CD4-positive, alpha-beta memory T cell (primary cell): ENCODE measurements at regions of chr6 and their contacts with region 1.

Region 1: GRCh38 chr6:132813173-132813856 is 1.1 kb upstream of the RPS12 start:
- DNase-seq: peak; percentile 58 to 67 (median 64)
- H3K4me3 ChIP-seq: peak overlapping the region; percentile 78
- H3K4me3 Mint-ChIP-seq: peak overlapping the region; percentile 94 to 100 (median 98)
- H3K27ac ChIP-seq: peak overlapping the region; percentile 76
- H3K27ac Mint-ChIP-seq: peak overlapping the region; percentile 96 to 99 (median 98)
- H3K4me1 ChIP-seq: peaks cover 40% of the 10 kb centered on the region
- H3K4me1 Mint-ChIP-seq: peaks cover 28 to 58% (median 45%) of the 10 kb centered on the region in 4 donors
- H3K27me3 ChIP-seq: no peaks in the 10 kb centered on the region
- H3K27me3 Mint-ChIP-seq: peaks cover 0 to 2% of the 10 kb centered on the region in 2 donors

Region 2: DNA sequence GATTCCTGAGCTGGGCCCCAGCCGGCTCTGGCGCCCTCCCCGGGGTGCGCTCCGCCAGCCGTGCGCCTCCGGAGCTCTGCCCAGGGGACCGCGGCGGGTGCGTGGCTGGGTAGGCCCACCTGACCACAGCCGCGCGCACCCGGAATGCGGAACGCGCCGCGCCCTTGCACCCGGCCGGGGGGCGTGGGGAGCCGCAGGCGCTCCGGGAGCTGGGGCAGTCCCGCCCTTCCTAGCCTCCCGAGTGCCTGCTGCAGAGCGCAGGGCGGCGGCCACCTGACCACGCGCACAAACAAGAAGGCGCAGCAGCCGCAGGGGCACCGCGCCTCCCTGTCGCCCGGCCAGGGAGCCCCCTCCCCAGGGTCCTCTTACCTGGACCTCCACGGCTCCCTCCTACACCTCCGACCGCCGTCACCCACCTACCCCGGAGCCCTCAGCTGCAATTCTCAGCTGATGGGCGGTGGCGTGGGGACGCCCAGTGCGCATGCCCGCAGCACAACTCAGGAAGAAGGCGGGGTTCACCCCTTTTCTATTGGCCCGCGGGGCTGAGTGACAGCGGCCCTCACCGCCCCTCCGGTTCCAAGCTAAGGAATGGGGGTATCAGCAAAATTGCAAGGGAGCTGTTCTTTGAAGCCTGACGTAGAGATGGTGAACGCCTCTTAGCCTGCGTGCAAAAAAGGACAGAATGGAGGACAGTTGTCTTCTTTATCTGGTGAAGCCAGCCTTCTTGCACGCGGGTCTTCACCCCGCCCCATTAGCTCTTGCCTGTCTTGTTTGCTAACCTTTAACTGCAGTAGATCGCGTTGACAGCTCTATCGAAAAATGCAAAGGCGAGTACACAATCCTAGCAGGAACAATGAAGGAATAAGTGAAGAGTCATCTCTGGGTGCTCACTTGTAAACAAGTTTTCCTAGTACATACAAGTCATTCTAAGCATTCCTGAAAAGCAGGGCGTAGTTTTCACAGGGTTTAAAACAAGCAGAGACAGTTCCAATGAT is 300.4 kb before region 1 on chr6 and contains the start of gene STX7:
- CTCF ChIA-PET with region 1: interaction called, 3 read pairs
- POLR2A ChIA-PET with region 1: interaction called, 39 read pairs
- intact Hi-C with region 1: loop called (anchors 1 kb)
- DNase-seq: peak; percentile 85 to 89 (median 87)
- H3K4me3 ChIP-seq: peak within 1 kb of the TSS; percentile 36 to 63
- H3K4me3 Mint-ChIP-seq: peak within 1 kb of the TSS; percentile 98 to 99 (median 98)
- H3K27ac ChIP-seq: peak within 1 kb of the TSS; percentile 54
- H3K27ac Mint-ChIP-seq: peak within 1 kb of the TSS; percentile 47 to 97 (median 92)
- H3K4me1 ChIP-seq: peaks cover 23% of the 10 kb centered on the region
- H3K4me1 Mint-ChIP-seq: peaks cover 23 to 40% (median 30%) of the 10 kb centered on the region in 4 donors
- H3K27me3 ChIP-seq: no peaks in the 10 kb centered on the region
- H3K27me3 Mint-ChIP-seq: no peaks in the 10 kb centered on the region
- total RNA-seq, gene STX7: 22.7 TPM

Region 3: DNA sequence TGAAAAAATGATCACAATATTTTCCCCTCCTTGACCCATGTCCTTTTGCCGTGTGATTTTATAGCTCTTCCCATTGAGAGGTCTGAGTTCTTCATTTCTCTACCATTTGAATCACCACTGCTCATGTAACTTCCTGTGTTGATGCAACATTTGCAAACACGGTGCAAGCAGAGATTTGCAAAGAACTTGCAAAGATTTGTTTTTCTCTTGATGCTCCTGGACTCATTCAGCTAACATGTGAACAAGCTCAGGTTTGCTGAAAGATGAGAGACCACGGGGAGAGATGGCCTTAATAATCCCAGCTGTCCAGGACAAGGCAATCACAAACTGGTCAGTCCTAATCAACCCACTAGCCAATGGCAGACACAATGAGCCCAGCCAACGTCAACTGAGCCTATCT is 64.2 kb before region 1 on chr6:
- CTCF ChIA-PET with region 1: no interaction called
- POLR2A ChIA-PET with region 1: interaction called, 12 read pairs
- intact Hi-C with region 1: no loop called
- DNase-seq: no peak
- H3K4me3 ChIP-seq: no peak overlapping the region
- H3K4me3 Mint-ChIP-seq: peak overlapping the region in 3 of 8 donors; percentile 3 to 42 (median 26)
- H3K27ac ChIP-seq: no peak overlapping the region
- H3K27ac Mint-ChIP-seq: peak overlapping the region in 4 of 7 donors; percentile 7 to 68 (median 15)
- H3K4me1 ChIP-seq: peaks cover 26% of the 10 kb centered on the region
- H3K4me1 Mint-ChIP-seq: peaks cover 16 to 29% (median 23%) of the 10 kb centered on the region in 4 donors
- H3K27me3 ChIP-seq: no peaks in the 10 kb centered on the region
- H3K27me3 Mint-ChIP-seq: no peaks in the 10 kb centered on the region

Region 4: GRCh38 chr6:132788658-132789395 is 24.5 kb before region 1 on chr6:
- CTCF ChIA-PET with region 1: interaction called, 6 read pairs
- POLR2A ChIA-PET with region 1: interaction called, 16 read pairs
- intact Hi-C with region 1: no loop called
- DNase-seq: no peak
- H3K4me3 ChIP-seq: no peak overlapping the region
- H3K4me3 Mint-ChIP-seq: no peak overlapping the region
- H3K27ac ChIP-seq: no peak overlapping the region
- H3K27ac Mint-ChIP-seq: peak overlapping the region in 2 of 7 donors; percentile 10 to 63
- H3K4me1 ChIP-seq: peaks cover 11% of the 10 kb centered on the region
- H3K4me1 Mint-ChIP-seq: peaks cover 9 to 18% (median 14%) of the 10 kb centered on the region in 4 donors
- H3K27me3 ChIP-seq: no peaks in the 10 kb centered on the region
- H3K27me3 Mint-ChIP-seq: no peaks in the 10 kb centered on the region

Region 5: GRCh38 chr6:132830334-132830751 is 17.0 kb after region 1 on chr6:
- CTCF ChIA-PET with region 1: interaction called, 6 read pairs
- POLR2A ChIA-PET with region 1: interaction called, 38 read pairs
- intact Hi-C with region 1: no loop called
- DNase-seq: no peak
- H3K4me3 ChIP-seq: no peak overlapping the region
- H3K4me3 Mint-ChIP-seq: no peak overlapping the region
- H3K27ac ChIP-seq: no peak overlapping the region
- H3K27ac Mint-ChIP-seq: peak overlapping the region in 1 of 7 donors; percentile 17
- H3K4me1 ChIP-seq: no peaks in the 10 kb centered on the region
- H3K4me1 Mint-ChIP-seq: no peaks in the 10 kb centered on the region
- H3K27me3 ChIP-seq: no peaks in the 10 kb centered on the region
- H3K27me3 Mint-ChIP-seq: no peaks in the 10 kb centered on the region